ENCODE measurements at regions of chr7 and their contacts with region 1.

Region 1: GRCh38 chr7:7719236-7719635 is 829 bp upstream of the RPA3 start:
- DNase-seq: peak; percentile 77
- ATAC-seq: peak; percentile 96
- H3K4me3 ChIP-seq: no peak overlapping the region
- H3K27ac ChIP-seq: peak overlapping the region; percentile 29; the same call in 1 of the 2 replicates
- H3K4me1 ChIP-seq: peaks cover 20% of the 10 kb centered on the region; the same call in 1 of the 2 replicates
- H3K27me3 ChIP-seq: no peaks in the 10 kb centered on the region
- CTCF ChIP-seq: no peak
- EP300 ChIP-seq: peak; percentile 74 to 80; a peak in 3 of 4 replicates
- POLR2A ChIP-seq: peak; percentile 37; the same call in 1 of the 2 replicates
- RAD21 ChIP-seq: peak; percentile 18; the same call in 1 of the 2 replicates

Region 2: GRCh38 chr7:7686811-7687508 is 32.3 kb before region 1 on chr7:
- CTCF ChIA-PET with region 1: interaction called, 23 read pairs
- POLR2A ChIA-PET with region 1: no interaction called
- RAD21 ChIA-PET with region 1: interaction called, 49 read pairs
- SMC1A ChIA-PET with region 1: interaction called, 58 read pairs
- in situ Hi-C with region 1: no loop called
- intact Hi-C with region 1: no loop called
- DNase-seq: no peak
- ATAC-seq: no peak
- H3K4me3 ChIP-seq: no peak overlapping the region
- H3K27ac ChIP-seq: no peak overlapping the region
- H3K4me1 ChIP-seq: no peaks in the 10 kb centered on the region; the same call in 1 of the 2 replicates
- H3K27me3 ChIP-seq: no peaks in the 10 kb centered on the region
- CTCF ChIP-seq: no peak
- EP300 ChIP-seq: no peak
- POLR2A ChIP-seq: no peak
- RAD21 ChIP-seq: no peak

Region 3: DNA sequence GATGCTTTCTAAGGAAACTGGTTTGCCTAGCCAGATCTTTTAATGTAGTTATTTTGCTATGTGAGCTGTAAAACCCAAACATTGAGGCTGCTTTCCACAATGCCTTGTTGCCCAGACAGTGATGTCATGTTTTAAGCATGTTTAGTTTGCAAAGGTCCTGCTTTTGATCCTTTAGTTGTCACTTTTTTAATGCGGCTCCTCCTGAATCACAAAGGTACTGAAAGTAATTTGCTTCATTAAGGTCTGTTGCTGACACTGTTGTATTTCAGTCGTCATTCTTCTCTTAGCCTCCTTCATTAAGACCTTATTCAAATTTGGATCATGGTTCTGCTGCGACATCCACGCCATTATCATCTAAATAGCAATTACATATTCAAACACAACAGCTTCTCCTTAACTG is 11.4 kb before region 1 on chr7:
- CTCF ChIA-PET with region 1: interaction called, 8 read pairs
- POLR2A ChIA-PET with region 1: interaction called, 14 read pairs
- RAD21 ChIA-PET with region 1: interaction called, 18 read pairs
- SMC1A ChIA-PET with region 1: interaction called, 49 read pairs
- in situ Hi-C with region 1: no loop called
- intact Hi-C with region 1: no loop called
- DNase-seq: no peak
- ATAC-seq: no peak
- H3K4me3 ChIP-seq: no peak overlapping the region
- H3K27ac ChIP-seq: no peak overlapping the region
- H3K4me1 ChIP-seq: peaks cover 15% of the 10 kb centered on the region; the same call in 1 of the 2 replicates
- H3K27me3 ChIP-seq: no peaks in the 10 kb centered on the region
- CTCF ChIP-seq: no peak
- EP300 ChIP-seq: no peak
- POLR2A ChIP-seq: no peak
- RAD21 ChIP-seq: no peak

Region 4: GRCh38 chr7:7732566-7733290 is 13.5 kb after region 1 on chr7:
- CTCF ChIA-PET with region 1: interaction called, 7 read pairs
- POLR2A ChIA-PET with region 1: interaction called, 5 read pairs
- RAD21 ChIA-PET with region 1: interaction called, 20 read pairs
- SMC1A ChIA-PET with region 1: interaction called, 87 read pairs
- in situ Hi-C with region 1: no loop called
- intact Hi-C with region 1: no loop called
- DNase-seq: no peak
- ATAC-seq: no peak
- H3K4me3 ChIP-seq: no peak overlapping the region
- H3K27ac ChIP-seq: no peak overlapping the region
- H3K4me1 ChIP-seq: no peaks in the 10 kb centered on the region
- H3K27me3 ChIP-seq: no peaks in the 10 kb centered on the region
- CTCF ChIP-seq: no peak
- EP300 ChIP-seq: no peak
- POLR2A ChIP-seq: no peak
- RAD21 ChIP-seq: no peak

Region 5: GRCh38 chr7:7739204-7740036 is 20.2 kb after region 1 on chr7:
- CTCF ChIA-PET with region 1: interaction called, 27 read pairs
- POLR2A ChIA-PET with region 1: interaction called, 5 read pairs
- RAD21 ChIA-PET with region 1: interaction called, 31 read pairs
- SMC1A ChIA-PET with region 1: interaction called, 87 read pairs
- in situ Hi-C with region 1: no loop called
- intact Hi-C with region 1: loop called (anchors 2 kb)
- DNase-seq: no peak
- ATAC-seq: peak; percentile 88
- H3K4me3 ChIP-seq: no peak overlapping the region
- H3K27ac ChIP-seq: no peak overlapping the region
- H3K4me1 ChIP-seq: peaks cover 5% of the 10 kb centered on the region; the same call in 1 of the 2 replicates
- H3K27me3 ChIP-seq: no peaks in the 10 kb centered on the region
- CTCF ChIP-seq: no peak
- EP300 ChIP-seq: peak; percentile 62 to 98
- POLR2A ChIP-seq: no peak
- RAD21 ChIP-seq: no peak

Region 6: DNA sequence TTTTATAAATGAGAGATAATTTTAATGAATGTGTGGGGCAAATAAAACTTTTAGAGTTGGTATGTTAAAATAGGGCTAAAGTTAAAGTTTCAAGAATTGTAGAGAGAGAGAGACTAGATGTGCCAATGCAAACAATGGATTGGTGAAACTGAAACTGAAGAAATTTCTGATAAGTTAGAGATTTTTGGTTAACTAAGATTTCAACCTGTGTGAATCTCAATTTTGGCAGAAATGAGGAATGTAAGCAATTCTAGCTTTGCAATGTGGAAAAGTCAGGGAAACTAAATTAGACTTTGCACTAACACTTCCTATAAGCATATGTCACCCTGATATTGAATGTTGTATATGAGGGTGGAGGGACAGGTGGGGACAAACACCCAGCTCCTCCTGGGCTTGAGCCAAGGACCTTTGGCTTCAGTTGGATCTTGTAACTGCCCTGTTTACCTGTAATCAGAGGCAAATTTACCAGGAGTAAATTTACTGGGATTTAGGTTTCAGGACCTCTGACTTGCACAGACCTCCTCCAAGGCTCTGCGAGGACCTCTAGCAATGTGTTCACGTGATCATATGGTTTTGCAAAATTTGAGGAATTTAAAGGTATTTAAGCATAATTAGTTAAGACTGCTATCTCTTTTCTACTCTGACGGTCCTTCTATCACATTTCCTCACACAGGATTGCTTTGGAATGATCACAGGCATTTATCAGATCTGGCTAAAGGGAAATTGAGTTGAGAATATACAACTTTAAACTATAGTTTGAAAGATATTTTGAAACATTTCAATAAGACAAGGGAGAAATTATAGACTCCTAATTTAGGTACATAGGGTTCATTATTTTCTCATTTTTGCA is 32.2 kb after region 1 on chr7:
- CTCF ChIA-PET with region 1: interaction called, 3 read pairs
- POLR2A ChIA-PET with region 1: no interaction called
- RAD21 ChIA-PET with region 1: interaction called, 3 read pairs
- SMC1A ChIA-PET with region 1: interaction called, 13 read pairs
- in situ Hi-C with region 1: no loop called
- intact Hi-C with region 1: no loop called
- DNase-seq: no peak
- ATAC-seq: peak; percentile 34; the same call in 1 of the 3 replicates
- H3K4me3 ChIP-seq: no peak overlapping the region
- H3K27ac ChIP-seq: no peak overlapping the region
- H3K4me1 ChIP-seq: no peaks in the 10 kb centered on the region
- H3K27me3 ChIP-seq: no peaks in the 10 kb centered on the region
- CTCF ChIP-seq: no peak
- EP300 ChIP-seq: no peak
- POLR2A ChIP-seq: no peak
- RAD21 ChIP-seq: no peak

Region 7: DNA sequence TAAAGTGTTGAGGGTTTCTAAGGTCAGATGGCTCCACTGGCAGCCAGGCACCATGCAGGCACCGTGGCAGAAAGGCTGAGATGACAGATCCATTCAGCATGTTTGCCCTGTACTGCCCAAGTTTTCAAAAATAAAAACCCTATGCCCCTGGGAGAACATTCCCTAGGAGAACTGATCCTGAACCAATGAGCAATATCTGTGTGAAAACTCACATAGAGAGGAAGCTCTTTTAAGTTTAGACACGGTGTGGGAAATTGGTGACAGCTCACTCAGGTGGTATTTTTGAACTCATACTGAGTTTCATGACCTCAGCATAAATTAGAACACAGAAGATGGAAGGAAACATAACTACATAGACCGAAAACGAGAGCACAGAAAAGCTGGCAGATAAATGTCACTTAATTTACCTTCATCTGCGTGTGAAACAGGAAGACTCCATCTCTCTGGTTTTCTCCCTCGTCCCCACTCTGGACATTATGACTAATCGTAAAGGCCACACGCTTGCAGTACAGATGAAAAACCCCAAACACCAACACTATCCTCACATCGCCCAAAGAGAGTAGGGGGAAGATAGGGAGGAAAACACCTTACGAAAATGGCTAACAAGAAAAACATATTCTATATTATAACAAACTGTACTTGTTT is 415.0 kb after region 1 on chr7:
- CTCF ChIA-PET with region 1: interaction called, 3 read pairs
- POLR2A ChIA-PET with region 1: no interaction called
- RAD21 ChIA-PET with region 1: interaction called, 11 read pairs
- SMC1A ChIA-PET with region 1: no interaction called
- in situ Hi-C with region 1: no loop called
- intact Hi-C with region 1: no loop called
- DNase-seq: peak; percentile 99
- ATAC-seq: peak; percentile 73
- H3K4me3 ChIP-seq: no peak overlapping the region
- H3K27ac ChIP-seq: peak overlapping the region; percentile 94
- H3K4me1 ChIP-seq: peaks cover 54% of the 10 kb centered on the region
- H3K27me3 ChIP-seq: no peaks in the 10 kb centered on the region
- CTCF ChIP-seq: no peak
- EP300 ChIP-seq: peak; percentile 81 to 92
- POLR2A ChIP-seq: no peak
- RAD21 ChIP-seq: peak; percentile 39; the same call in 1 of the 2 replicates